PC-3 (cell line): ENCODE measurements at regions of chr11 and their contacts with region 1.

Region 1: GRCh38 chr11:57131080-57131790 is 50.5 kb upstream of the LRRC55 start:
- DNase-seq: peak; percentile 65
- ATAC-seq: peak; percentile 63; the same call in 1 of the 2 replicates
- H3K4me3 ChIP-seq: no peak overlapping the region
- H3K27ac ChIP-seq: no peak overlapping the region
- H3K4me1 ChIP-seq: peaks cover 10% of the 10 kb centered on the region; the same call in 1 of the 2 replicates
- H3K27me3 ChIP-seq: peaks cover 67% of the 10 kb centered on the region
- CTCF ChIP-seq: peak; percentile 77

Region 2: DNA sequence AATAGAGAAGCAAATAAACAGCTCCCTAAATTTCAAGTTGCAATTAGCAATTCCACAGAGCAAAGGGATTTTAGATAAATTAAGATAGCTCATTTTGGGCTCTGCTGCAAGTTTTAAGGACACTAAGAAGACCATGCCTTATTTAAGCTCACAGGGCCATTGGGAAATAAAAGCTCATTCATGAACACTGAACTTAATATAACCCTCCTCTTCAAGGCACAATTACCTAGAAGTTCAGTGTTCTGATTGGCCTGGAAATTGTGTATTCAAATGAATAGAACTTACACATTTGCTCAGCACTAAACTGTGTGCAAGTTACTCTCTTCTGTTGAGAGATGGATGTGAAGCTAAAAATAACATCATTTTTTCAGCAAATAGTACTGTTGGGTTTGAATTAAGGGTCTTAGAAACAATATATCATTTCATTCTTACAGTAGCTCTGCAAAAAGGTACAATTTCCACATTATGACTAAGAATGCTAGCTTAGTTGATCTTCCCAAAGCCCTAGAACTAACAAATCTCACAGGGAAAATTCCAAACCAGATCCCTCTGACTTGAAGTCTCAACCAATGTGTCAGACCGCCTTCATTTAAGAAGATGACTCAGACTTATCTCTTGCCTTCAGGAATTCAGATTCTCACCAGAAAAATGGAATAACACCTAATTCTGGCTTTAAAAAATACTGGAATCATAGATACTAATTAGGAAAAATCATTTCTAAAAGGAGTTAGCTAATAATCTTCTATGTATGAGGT is 36.9 kb before region 1 on chr11:
- CTCF ChIA-PET with region 1: no interaction called
- POLR2A ChIA-PET with region 1: no interaction called
- intact Hi-C with region 1: no loop called
- DNase-seq: no peak
- ATAC-seq: no peak
- H3K4me3 ChIP-seq: no peak overlapping the region
- H3K27ac ChIP-seq: no peak overlapping the region
- H3K4me1 ChIP-seq: no peaks in the 10 kb centered on the region
- H3K27me3 ChIP-seq: peaks cover 66% of the 10 kb centered on the region
- CTCF ChIP-seq: no peak

Region 3: GRCh38 chr11:57567515-57568329 is 436.5 kb after region 1 on chr11 and contains the start of gene UBE2L6:
- CTCF ChIA-PET with region 1: no interaction called
- POLR2A ChIA-PET with region 1: interaction called, 26 read pairs
- intact Hi-C with region 1: no loop called
- DNase-seq: no peak
- ATAC-seq: peak; percentile 81
- H3K4me3 ChIP-seq: peak within 1 kb of the TSS; percentile 98
- H3K27ac ChIP-seq: no peak within 1 kb of the TSS
- H3K4me1 ChIP-seq: peaks cover 20% of the 10 kb centered on the region
- H3K27me3 ChIP-seq: no peaks in the 10 kb centered on the region
- CTCF ChIP-seq: no peak; the same call in 1 of the 2 replicates
- total RNA-seq, gene UBE2L6: 16.5 and 17.3 TPM in 2 replicates